Activated CD4-positive, alpha-beta T cell treated with anti-CD3 and anti-CD28 coated beads, Interleukin-2, amount 10 ng/mL, durations not matched to agents 24 days and 14 days (primary cell): ENCODE measurements at regions of chr3 and their contacts with region 1.

Region 1: GRCh38 chr3:114152519-114153151 is 26.2 kb downstream of the DRD3 start:
- DNase-seq: peak; percentile 92
- H3K4me3 Mint-ChIP-seq: peak overlapping the region; percentile 54
- H3K27ac Mint-ChIP-seq: no peak overlapping the region
- H3K4me1 Mint-ChIP-seq: peaks cover 3% of the 10 kb centered on the region
- H3K27me3 Mint-ChIP-seq: peaks cover 7% of the 10 kb centered on the region

Region 2: GRCh38 chr3:113606539-113607218 is 546.0 kb before region 1 on chr3:
- intact Hi-C with region 1: no loop called
- DNase-seq: peak; percentile 85
- H3K4me3 Mint-ChIP-seq: peak overlapping the region; percentile 55
- H3K27ac Mint-ChIP-seq: peak overlapping the region; percentile 27
- H3K4me1 Mint-ChIP-seq: peaks cover 18% of the 10 kb centered on the region
- H3K27me3 Mint-ChIP-seq: no peaks in the 10 kb centered on the region

Region 3: GRCh38 chr3:113736548-113737089 is 416.0 kb before region 1 on chr3:
- intact Hi-C with region 1: loop called (anchors 1 kb)
- DNase-seq: peak; percentile 81
- H3K4me3 Mint-ChIP-seq: no peak overlapping the region
- H3K27ac Mint-ChIP-seq: peak overlapping the region; percentile 20
- H3K4me1 Mint-ChIP-seq: peaks cover 43% of the 10 kb centered on the region
- H3K27me3 Mint-ChIP-seq: no peaks in the 10 kb centered on the region

Region 4: DNA sequence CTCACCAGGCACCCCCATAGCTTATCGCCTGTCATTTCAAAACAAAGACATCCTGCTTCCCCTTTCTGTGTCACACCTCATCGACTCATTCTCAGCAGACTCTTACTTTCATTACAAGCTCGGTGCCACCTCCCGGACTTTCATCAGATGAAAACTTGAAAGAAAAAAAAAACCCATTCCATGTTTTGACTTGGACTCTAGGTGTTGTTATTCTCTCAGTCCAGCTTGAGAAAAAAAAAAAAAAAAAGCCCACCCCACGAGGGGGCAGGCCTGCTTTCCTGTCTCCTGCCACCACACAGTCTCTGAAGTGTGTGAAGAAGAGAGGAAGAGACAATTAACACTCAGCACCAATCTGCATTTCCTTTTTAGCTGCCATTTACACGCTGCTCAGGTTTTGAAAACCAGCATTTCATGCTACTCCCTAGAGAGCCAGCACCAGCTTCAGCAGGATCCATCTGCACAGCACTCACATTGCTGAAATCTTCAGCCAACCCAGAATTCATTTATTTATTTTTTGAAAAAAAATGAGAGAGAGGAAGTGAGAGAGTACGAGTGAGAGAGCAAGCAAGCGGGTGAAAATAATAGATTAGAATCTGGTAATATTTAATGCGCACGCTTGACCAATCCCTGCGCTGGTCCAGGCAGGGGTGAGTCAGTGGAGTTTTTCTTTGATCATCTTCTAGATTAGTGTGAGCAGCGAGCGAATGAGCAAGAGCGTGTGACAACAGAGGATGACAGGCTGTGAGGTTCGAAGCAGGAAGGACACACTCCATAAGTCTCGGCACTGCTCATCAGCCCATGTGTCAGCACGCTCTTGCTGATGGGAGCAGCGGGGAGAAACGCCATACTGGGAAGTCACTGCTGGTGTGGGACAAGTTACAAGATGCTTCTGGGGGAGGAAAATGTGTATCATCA is 61.2 kb after region 1 on chr3:
- intact Hi-C with region 1: loop called (anchors 1 kb)
- DNase-seq: peak; percentile 89
- H3K4me3 Mint-ChIP-seq: no peak overlapping the region
- H3K27ac Mint-ChIP-seq: no peak overlapping the region
- H3K4me1 Mint-ChIP-seq: peaks cover 23% of the 10 kb centered on the region
- H3K27me3 Mint-ChIP-seq: no peaks in the 10 kb centered on the region

Region 5: DNA sequence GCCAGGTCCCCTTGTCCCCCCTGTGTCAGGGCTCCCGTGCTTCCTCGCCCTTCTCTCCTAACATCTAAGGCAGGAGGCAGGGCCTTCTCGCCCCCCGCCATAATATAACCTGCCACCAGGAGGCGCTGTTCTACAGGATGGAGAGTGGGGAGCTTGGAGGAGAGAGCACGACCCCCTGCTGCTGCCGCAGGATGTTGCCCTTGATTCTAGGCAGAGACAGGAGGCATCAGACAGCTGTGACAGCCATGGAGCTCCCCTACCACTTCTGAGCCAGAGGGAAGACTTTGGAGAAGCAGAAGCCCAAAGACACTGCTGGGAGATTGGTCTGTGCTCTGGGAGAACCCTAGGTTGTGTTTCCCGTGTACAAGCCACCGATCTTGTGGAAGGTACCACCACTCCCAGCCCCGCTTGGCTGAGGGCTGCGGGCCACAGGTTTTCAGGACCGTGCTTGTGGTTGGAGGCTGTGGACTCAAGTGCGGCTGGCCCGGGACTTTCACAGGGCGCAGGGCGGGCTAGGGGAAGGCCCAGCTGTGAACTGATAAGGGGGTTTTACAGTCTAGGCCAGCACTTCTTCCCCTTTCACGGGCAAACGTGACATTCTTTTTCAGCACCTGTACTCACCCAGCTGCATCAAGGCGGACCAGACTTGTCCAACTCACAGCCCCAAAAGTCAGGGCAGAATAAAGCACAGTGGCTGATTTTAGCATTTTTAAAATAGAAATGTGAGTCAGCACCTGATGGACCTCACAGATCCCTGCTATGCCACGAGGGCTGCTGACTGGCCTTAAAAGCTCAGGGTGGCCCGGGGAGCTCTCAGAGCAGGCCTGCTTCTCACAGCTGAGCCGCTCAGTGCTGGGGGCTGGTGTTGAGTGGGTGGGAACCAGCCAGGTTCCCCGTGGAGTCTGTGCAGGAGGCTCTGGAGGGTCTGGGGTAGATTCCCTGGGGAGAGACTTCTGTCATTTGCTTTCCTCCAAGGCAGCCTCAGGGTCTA is 138.6 kb after region 1 on chr3:
- intact Hi-C with region 1: loop called (anchors 1 kb)
- DNase-seq: peak; percentile 94
- H3K4me3 Mint-ChIP-seq: peak overlapping the region; percentile 50
- H3K27ac Mint-ChIP-seq: peak overlapping the region; percentile 83
- H3K4me1 Mint-ChIP-seq: peaks cover 15% of the 10 kb centered on the region
- H3K27me3 Mint-ChIP-seq: no peaks in the 10 kb centered on the region

Region 6: GRCh38 chr3:114362815-114363214 is 210.2 kb after region 1 on chr3:
- intact Hi-C with region 1: loop called (anchors 1 kb)
- DNase-seq: no peak
- H3K4me3 Mint-ChIP-seq: no peak overlapping the region
- H3K27ac Mint-ChIP-seq: no peak overlapping the region
- H3K4me1 Mint-ChIP-seq: peaks cover 2% of the 10 kb centered on the region
- H3K27me3 Mint-ChIP-seq: no peaks in the 10 kb centered on the region

Region 7: DNA sequence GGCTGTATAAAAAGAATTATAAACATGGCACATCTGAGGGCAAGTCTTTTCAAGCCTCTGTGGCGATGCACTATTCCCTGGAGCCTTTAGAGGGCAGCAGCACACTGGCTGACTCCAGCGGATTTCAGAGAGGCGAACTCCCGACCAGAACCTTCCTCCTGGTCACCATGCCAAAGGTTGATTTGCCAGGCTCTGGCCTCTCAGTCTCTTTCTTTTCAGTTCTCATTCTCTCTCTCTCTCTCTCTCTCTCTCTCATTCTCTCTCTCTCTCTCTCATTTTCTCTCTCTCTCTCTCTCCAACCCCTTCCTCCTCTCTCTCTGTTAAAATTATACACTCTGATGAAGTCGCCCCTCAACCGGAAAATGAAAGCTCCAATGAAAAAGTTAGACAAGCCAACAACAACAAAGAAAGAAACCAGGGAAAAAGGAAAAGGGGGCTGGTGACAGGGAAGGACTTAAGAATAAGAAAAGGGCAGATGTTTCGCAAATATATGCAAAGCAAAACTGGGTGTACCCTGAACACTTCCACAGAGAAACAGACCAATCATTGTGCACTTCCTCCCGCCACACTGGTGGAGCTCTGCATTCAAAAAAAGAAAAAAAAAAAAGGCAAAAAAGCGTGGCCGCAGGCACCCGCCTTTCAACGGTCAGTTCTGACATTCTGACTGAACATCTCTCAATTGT is 231.4 kb after region 1 on chr3:
- intact Hi-C with region 1: loop called (anchors 2 kb)
- DNase-seq: peak; percentile 89
- H3K4me3 Mint-ChIP-seq: peak overlapping the region; percentile 77
- H3K27ac Mint-ChIP-seq: peak overlapping the region; percentile 81
- H3K4me1 Mint-ChIP-seq: peaks cover 12% of the 10 kb centered on the region
- H3K27me3 Mint-ChIP-seq: no peaks in the 10 kb centered on the region

Region 8: DNA sequence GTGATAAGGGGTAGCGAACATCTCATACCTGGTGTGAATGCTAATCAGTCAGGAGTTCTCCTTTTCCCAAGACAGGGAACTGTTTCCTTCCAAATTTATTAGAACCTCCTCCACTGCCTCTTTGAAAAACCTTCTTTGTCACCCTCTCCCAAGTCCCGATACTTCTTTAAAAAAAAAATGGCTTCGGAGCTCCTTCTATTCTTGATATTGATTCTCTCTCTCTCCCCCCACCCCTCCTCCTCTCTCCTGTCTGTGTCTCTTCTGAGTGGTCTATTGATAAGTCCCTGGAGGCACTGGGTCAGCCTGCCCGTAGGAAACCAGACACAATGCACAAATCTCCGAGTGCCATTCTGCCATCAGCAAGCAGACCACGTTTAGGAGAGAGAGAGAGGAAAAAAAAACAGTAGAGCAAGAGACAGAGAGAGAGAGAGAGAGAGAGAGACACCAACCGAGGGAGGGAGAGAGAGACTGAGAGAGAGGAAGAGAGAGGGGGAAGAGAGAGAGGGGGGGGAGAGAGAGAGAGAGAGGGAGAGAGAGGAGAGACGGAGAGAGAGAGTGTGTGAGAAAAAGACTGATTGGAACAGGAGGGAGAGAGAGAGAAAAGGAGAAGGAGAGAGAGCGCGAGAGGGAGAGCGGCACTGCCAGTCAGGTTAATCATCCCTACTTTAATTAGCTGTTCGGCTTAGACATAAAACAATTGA is 302.1 kb after region 1 on chr3:
- intact Hi-C with region 1: no loop called
- DNase-seq: no peak
- H3K4me3 Mint-ChIP-seq: no peak overlapping the region
- H3K27ac Mint-ChIP-seq: no peak overlapping the region
- H3K4me1 Mint-ChIP-seq: peaks cover 2% of the 10 kb centered on the region
- H3K27me3 Mint-ChIP-seq: peaks cover 12% of the 10 kb centered on the region

Region 9: GRCh38 chr3:115819785-115820384 is 1667.2 kb after region 1 on chr3:
- intact Hi-C with region 1: loop called (anchors 10 kb)
- DNase-seq: peak; percentile 90
- H3K4me3 Mint-ChIP-seq: no peak overlapping the region
- H3K27ac Mint-ChIP-seq: no peak overlapping the region
- H3K4me1 Mint-ChIP-seq: no peaks in the 10 kb centered on the region
- H3K27me3 Mint-ChIP-seq: no peaks in the 10 kb centered on the region